ENCODE measurements at regions of chr2 and their contacts with region 1.

Region 1: DNA sequence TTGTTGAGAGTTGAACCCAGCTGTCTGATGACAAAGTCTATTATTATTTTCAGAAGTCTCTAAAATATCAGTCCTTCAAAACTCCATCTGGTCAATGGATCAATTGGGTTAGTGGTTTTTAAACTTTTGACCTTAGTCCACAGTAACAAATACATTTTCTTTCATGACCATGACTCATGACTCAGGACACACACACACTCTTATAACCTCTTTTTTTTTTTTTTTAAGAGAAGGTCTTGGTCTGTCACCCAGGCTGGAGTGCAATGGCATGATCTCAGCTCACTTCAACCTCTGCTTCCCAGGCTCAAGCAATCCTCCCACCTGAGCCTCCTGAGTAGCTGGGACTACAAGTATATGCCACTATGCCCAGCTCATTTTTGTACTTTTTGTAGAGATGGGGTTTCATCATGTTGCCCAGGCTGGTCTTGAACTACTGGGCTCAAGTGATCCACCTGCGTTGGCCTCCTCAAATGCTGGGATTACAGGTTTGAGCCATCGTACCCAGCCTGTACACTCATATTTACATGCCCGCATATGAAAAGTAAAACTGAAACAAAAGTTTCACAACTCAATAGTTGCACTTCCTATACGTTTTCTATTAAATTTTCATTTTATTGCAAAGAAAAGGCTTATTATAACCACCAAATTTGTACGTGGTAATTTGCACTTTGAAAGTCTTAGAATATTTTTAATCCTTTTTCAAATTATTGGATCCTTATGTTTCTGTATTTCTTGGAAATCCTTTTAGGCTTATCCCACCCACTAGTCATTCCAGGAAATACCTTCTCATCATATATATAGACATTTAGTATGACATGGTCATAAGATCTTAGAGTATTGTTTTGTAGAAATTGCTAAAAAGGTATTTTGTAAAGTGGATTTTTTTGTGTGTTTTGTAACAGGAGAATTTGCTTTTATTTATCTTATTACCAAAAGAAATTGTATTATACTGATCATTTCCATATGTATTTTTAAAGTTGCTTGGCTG is 199.0 kb downstream of the LPIN1 start:
- DNase-seq: peak; percentile 54
- H3K4me3 Mint-ChIP-seq: no peak overlapping the region
- H3K27ac Mint-ChIP-seq: no peak overlapping the region
- H3K4me1 Mint-ChIP-seq: peaks cover 12% of the 10 kb centered on the region
- H3K27me3 Mint-ChIP-seq: no peaks in the 10 kb centered on the region

Region 2: GRCh38 chr2:12721566-12722446 is 776.4 kb after region 1 on chr2:
- CTCF ChIA-PET with region 1: no interaction called
- POLR2A ChIA-PET with region 1: no interaction called
- intact Hi-C with region 1: loop called (anchors 1 kb)
- DNase-seq: peak; percentile 63
- H3K4me3 Mint-ChIP-seq: peak overlapping the region; percentile 86
- H3K27ac Mint-ChIP-seq: peak overlapping the region; percentile 75
- H3K4me1 Mint-ChIP-seq: peaks cover 77% of the 10 kb centered on the region
- H3K27me3 Mint-ChIP-seq: no peaks in the 10 kb centered on the region